ENCODE measurements at regions of chr18 and their contacts with region 1.

Region 1: GRCh38 chr18:24362758-24363157 is 34.9 kb downstream of the OSBPL1A start:
- DNase-seq: no peak
- ATAC-seq: no peak
- H3K4me3 ChIP-seq: no peak overlapping the region
- H3K27ac ChIP-seq: no peak overlapping the region
- H3K4me1 ChIP-seq: no peaks in the 10 kb centered on the region
- H3K27me3 ChIP-seq: no peaks in the 10 kb centered on the region

Region 2: GRCh38 chr18:24432618-24433017 is 69.9 kb after region 1 on chr18:
- intact Hi-C with region 1: loop called in 1 of 2 experiments (anchors 5 kb)
- DNase-seq: no peak
- ATAC-seq: no peak
- H3K4me3 ChIP-seq: no peak overlapping the region
- H3K27ac ChIP-seq: no peak overlapping the region
- H3K4me1 ChIP-seq: no peaks in the 10 kb centered on the region
- H3K27me3 ChIP-seq: no peaks in the 10 kb centered on the region

Region 3: DNA sequence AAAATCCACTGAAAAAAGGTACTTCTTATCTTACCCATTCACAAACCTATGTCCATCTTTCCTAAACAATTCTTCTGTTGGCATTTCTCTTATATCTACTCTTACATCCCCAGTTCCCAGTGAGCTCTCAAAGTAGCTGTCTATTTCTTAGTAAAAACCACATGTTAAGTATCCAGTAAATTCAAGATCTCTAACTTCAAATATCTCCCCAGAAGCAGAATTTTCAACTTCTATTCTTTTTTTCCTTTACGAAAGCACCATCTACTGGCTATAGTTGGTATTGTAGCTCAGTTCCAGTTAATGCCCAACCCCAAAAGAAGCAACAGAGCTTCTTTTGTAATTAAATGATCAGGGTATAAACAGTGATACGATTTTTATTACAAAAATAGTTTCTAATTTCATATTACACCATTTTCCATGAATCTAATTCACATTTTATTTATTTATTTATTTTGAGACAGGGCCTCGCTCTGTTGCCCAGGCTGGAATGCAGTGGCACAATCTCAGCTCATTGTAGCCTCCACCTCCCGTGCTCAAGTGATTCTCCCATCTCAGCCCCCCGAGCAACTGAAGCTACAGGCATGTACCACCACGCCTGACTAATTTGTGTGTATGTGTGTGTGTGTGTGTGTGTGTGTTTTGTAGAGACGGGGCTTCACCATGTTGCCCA is 126.2 kb after region 1 on chr18:
- intact Hi-C with region 1: loop called (anchors 2 to 5 kb)
- DNase-seq: no peak
- ATAC-seq: peak; percentile 74
- H3K4me3 ChIP-seq: no peak overlapping the region
- H3K27ac ChIP-seq: no peak overlapping the region
- H3K4me1 ChIP-seq: no peaks in the 10 kb centered on the region
- H3K27me3 ChIP-seq: no peaks in the 10 kb centered on the region